ENCODE measurements at regions of chr10 and their contacts with region 1.

Region 1: GRCh38 chr10:98045785-98046389 is 15.5 kb upstream of the CRTAC1 start:
- DNase-seq: peak; percentile 74 to 76
- ATAC-seq: peak; percentile 55 to 88; a peak in 5 of 6 replicates
- H3K4me3 ChIP-seq: no peak overlapping the region
- H3K27ac ChIP-seq: no peak overlapping the region
- H3K4me1 ChIP-seq: no peaks in the 10 kb centered on the region
- CTCF ChIP-seq: peak; percentile 82
- EP300 ChIP-seq: no peak
- POLR2A ChIP-seq: no peak
- RAD21 ChIP-seq: peak; percentile 56 to 66; a peak in 4 of 5 replicates

Region 2: DNA sequence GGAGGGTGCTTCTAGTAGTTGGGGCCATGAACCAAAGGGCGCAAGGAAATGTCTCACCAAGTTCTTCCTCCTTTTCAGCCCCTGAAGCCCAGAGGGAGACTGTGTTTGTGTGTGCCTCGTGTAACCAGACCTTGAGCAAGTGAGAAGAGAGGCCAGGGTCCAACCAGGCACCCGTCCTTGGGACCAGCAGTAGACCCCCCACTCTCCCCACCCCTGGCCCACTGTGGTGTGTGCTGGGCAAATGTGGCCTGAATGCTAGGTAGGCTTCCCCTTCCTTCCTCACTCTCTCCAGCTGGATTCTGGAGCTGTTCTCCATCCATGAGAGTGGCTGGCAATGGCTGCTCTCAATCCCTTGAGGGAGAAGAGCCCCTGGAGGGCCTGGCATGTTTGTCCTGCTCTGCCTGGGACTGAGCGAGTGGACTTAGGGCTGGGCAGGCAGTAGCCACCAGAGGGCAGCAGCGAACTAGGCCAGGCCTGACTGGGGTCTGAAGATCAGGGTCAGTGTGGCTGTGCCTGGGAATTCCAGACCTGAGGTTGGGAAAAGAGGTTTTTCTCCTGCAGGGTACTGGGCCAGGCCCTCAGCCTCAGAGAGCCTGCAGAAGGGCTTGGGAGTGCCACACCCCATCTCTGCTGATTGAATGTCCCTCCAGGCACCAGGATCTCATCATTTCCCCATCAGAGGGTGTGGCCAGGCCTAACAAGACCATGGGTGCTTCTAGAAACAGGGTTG is 286.6 kb before region 1 on chr10:
- CTCF ChIA-PET with region 1: interaction called, 50 read pairs
- POLR2A ChIA-PET with region 1: no interaction called
- DNase-seq: peak; percentile 80 to 94
- ATAC-seq: peak; percentile 82 to 96
- H3K4me3 ChIP-seq: no peak overlapping the region
- H3K27ac ChIP-seq: no peak overlapping the region
- H3K4me1 ChIP-seq: no peaks in the 10 kb centered on the region
- CTCF ChIP-seq: peak; percentile 87
- EP300 ChIP-seq: no peak
- POLR2A ChIP-seq: no peak
- RAD21 ChIP-seq: peak; percentile 87 to 92

Region 3: GRCh38 chr10:97843281-97843671 is 202.6 kb before region 1 on chr10:
- CTCF ChIA-PET with region 1: no interaction called
- POLR2A ChIA-PET with region 1: no interaction called
- DNase-seq: peak in 1 of 2 experiments; percentile 71
- ATAC-seq: peak; percentile 69 to 70
- H3K4me3 ChIP-seq: no peak overlapping the region
- H3K27ac ChIP-seq: peak overlapping the region; percentile 42 to 64; a peak in 5 of 6 replicates
- H3K4me1 ChIP-seq: peaks cover 32% of the 10 kb centered on the region
- CTCF ChIP-seq: no peak
- EP300 ChIP-seq: no peak
- POLR2A ChIP-seq: no peak
- RAD21 ChIP-seq: no peak

Region 4: DNA sequence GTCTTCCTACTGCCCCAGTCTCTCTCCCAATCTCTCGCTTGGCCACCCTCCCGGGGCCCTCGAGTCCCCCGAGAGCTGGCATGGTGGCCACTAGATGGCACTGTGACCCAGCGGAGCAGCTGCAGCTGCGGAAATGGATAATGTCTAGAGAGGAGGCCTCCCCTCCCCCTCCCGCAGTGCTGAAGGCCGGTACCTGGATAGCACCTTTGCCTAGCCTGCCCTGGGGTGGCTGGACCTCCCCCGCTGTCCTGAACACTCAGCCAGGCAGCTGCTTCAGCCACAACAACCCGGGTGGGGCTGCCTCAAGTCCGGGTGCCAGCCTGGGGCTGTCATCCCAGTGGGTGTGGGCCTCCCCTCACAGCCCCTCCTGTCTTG is 131.1 kb before region 1 on chr10:
- CTCF ChIA-PET with region 1: interaction called, 660 read pairs
- POLR2A ChIA-PET with region 1: interaction called, 8 read pairs
- DNase-seq: peak; percentile 66 to 82
- ATAC-seq: peak; percentile 90 to 97
- H3K4me3 ChIP-seq: no peak overlapping the region
- H3K27ac ChIP-seq: peak overlapping the region; percentile 3 to 69; a peak in 3 of 6 replicates
- H3K4me1 ChIP-seq: 0 out of 3 replicates have a peak, but pooled peaks cover 2% of the 10 kb centered on the region
- CTCF ChIP-seq: peak; percentile 93
- EP300 ChIP-seq: no peak
- POLR2A ChIP-seq: no peak
- RAD21 ChIP-seq: peak; percentile 96 to 97

Region 5: DNA sequence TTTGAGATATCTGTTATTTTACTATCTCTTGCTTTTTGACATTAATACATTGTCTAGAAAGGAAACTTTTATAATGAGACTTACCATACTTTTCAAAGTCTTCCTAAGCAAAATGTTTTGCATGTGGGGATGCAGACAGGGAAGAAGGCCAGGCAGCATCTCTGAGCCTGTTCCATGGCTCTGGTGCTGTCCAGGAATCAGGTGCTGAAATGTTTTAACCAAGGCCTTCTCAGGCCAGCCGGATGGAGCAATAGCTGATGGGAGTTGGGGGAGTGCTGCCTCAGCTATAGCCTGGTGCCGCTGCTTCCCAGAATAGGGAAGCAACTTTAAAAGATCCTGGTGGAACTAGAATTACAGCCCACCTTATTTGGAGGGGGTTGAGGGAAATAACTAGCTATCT is 54.0 kb before region 1 on chr10:
- CTCF ChIA-PET with region 1: interaction called, 10 read pairs
- POLR2A ChIA-PET with region 1: no interaction called
- DNase-seq: peak; percentile 13 to 23
- ATAC-seq: peak in 1 of 2 experiments; percentile 43; a peak in 1 of 6 replicates
- H3K4me3 ChIP-seq: no peak overlapping the region
- H3K27ac ChIP-seq: no peak overlapping the region
- H3K4me1 ChIP-seq: no peaks in the 10 kb centered on the region
- CTCF ChIP-seq: no peak
- EP300 ChIP-seq: no peak
- POLR2A ChIP-seq: no peak
- RAD21 ChIP-seq: no peak

Region 6: DNA sequence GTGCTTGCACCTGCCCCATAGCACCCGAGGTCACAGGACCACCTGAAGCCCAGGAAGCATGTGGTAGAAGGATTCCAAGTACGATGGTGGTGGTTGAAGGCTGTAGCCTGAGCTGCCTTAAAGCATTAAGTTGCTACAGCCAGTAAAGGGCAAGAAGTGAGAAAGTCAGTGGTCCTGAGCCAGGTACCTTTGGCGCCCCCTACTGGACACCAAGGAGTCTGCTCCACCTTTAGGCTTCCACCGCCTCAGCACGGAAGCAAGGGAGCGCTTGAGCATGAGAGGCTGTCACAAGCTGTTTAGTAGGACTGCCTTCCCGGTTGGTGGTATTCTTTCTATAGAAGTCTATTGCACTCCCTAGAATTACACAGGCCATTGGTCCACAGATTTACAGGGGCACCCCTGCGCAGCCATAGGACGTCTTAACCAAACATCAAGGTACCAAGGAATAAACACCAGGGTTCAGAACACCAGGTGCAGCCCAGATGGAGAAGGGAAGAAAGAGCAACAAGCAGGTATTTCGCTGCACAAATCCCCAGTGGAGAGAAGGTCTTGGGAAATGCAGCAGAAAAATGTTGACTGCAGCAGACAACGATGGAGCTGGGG is 17.6 kb before region 1 on chr10:
- CTCF ChIA-PET with region 1: interaction called, 77 read pairs
- POLR2A ChIA-PET with region 1: no interaction called
- DNase-seq: peak; percentile 72 to 73
- ATAC-seq: peak; percentile 20 to 72; a peak in 3 of 6 replicates
- H3K4me3 ChIP-seq: no peak overlapping the region
- H3K27ac ChIP-seq: no peak overlapping the region
- H3K4me1 ChIP-seq: peaks cover 15% of the 10 kb centered on the region; the same call in 1 of the 3 replicates
- CTCF ChIP-seq: peak; percentile 64
- EP300 ChIP-seq: no peak
- POLR2A ChIP-seq: no peak
- RAD21 ChIP-seq: peak; percentile 19 to 61; a peak in 2 of 5 replicates

Measured in A549 (cell line).